ENCODE measurements at regions of chr12 and their contacts with region 1.

Region 1: GRCh38 chr12:31506515-31507306 is 84.2 kb downstream of the DENND5B start:
- DNase-seq: no peak
- H3K4me3 Mint-ChIP-seq: no peak overlapping the region
- H3K27ac Mint-ChIP-seq: no peak overlapping the region
- H3K4me1 Mint-ChIP-seq: no peaks in the 10 kb centered on the region
- H3K27me3 Mint-ChIP-seq: no peaks in the 10 kb centered on the region

Region 2: DNA sequence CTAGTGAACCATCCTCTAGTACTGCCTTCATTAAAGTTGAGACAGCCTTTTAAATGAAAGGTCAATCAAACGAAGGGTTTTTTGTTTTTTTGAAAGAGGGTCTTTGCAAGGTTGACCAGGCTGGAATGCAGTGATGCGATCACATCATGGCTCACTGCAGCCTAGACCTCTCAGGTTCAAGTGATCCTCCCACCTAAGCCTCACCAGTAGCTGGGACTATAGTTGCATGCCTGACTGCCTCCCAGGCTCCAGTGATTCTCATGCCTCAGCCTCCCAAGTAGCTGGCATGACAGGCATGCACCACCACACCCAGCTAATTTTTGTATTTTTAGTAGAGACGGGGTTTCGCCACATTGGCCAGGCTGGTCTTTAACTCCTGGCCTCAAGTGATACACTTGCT is 66.1 kb before region 1 on chr12:
- CTCF ChIA-PET with region 1: no interaction called
- POLR2A ChIA-PET with region 1: no interaction called
- intact Hi-C with region 1: loop called (anchors 5 kb)
- DNase-seq: no peak
- H3K4me3 Mint-ChIP-seq: no peak overlapping the region
- H3K27ac Mint-ChIP-seq: no peak overlapping the region
- H3K4me1 Mint-ChIP-seq: no peaks in the 10 kb centered on the region
- H3K27me3 Mint-ChIP-seq: peaks cover 3% of the 10 kb centered on the region